CD8-positive, alpha-beta T cell (primary cell): ENCODE measurements at regions of chr7 and their contacts with region 1.

Region 1: GRCh38 chr7:74254129-74254857 is at the start of gene RFC2:
- DNase-seq: peak; percentile 93 to 99 (median 97)
- ATAC-seq: peak; percentile 95
- H3K4me3 ChIP-seq: peak within 1 kb of the TSS; percentile 85 to 99
- H3K4me3 Mint-ChIP-seq: peak within 1 kb of the TSS; percentile 93
- H3K27ac ChIP-seq: peak within 1 kb of the TSS; percentile 89 to 93
- H3K27ac Mint-ChIP-seq: peak within 1 kb of the TSS; percentile 96
- H3K4me1 ChIP-seq: peaks cover 17% of the 10 kb centered on the region
- H3K4me1 Mint-ChIP-seq: peaks cover 28% of the 10 kb centered on the region
- H3K27me3 ChIP-seq: no peaks in the 10 kb centered on the region
- H3K27me3 Mint-ChIP-seq: no peaks in the 10 kb centered on the region
- CTCF ChIP-seq: no peak
- total RNA-seq, gene RFC2: 8.8 to 10.7 TPM

Region 2: GRCh38 chr7:74068393-74069085 is 185.8 kb before region 1 on chr7:
- CTCF ChIA-PET with region 1: no interaction called
- POLR2A ChIA-PET with region 1: no interaction called
- intact Hi-C with region 1: loop called in 1 of 2 experiments (anchors 5 kb)
- DNase-seq: no peak
- ATAC-seq: no peak
- H3K4me3 ChIP-seq: no peak overlapping the region
- H3K4me3 Mint-ChIP-seq: no peak overlapping the region
- H3K27ac ChIP-seq: no peak overlapping the region
- H3K27ac Mint-ChIP-seq: no peak overlapping the region
- H3K4me1 ChIP-seq: no peaks in the 10 kb centered on the region
- H3K4me1 Mint-ChIP-seq: peaks cover 2% of the 10 kb centered on the region
- H3K27me3 ChIP-seq: no peaks in the 10 kb centered on the region
- H3K27me3 Mint-ChIP-seq: no peaks in the 10 kb centered on the region
- CTCF ChIP-seq: no peak

Region 3: GRCh38 chr7:74083117-74083876 is 171.0 kb before region 1 on chr7 and contains the start of gene LIMK1:
- CTCF ChIA-PET with region 1: no interaction called
- POLR2A ChIA-PET with region 1: no interaction called
- intact Hi-C with region 1: loop called in 1 of 2 experiments (anchors 2 kb)
- DNase-seq: peak; percentile 68 to 91 (median 81)
- ATAC-seq: peak; percentile 97
- H3K4me3 ChIP-seq: peak within 1 kb of the TSS; percentile 61
- H3K4me3 Mint-ChIP-seq: peak within 1 kb of the TSS; percentile 81
- H3K27ac ChIP-seq: peak within 1 kb of the TSS in 1 of 2 experiments; percentile 36
- H3K27ac Mint-ChIP-seq: no peak within 1 kb of the TSS
- H3K4me1 ChIP-seq: peaks cover 12% of the 10 kb centered on the region
- H3K4me1 Mint-ChIP-seq: peaks cover 9% of the 10 kb centered on the region
- H3K27me3 ChIP-seq: no peaks in the 10 kb centered on the region
- H3K27me3 Mint-ChIP-seq: no peaks in the 10 kb centered on the region
- CTCF ChIP-seq: no peak
- total RNA-seq, gene LIMK1: 12.8 to 13.7 TPM

Region 4: GRCh38 chr7:74121401-74122249 is 132.7 kb before region 1 on chr7:
- CTCF ChIA-PET with region 1: no interaction called
- POLR2A ChIA-PET with region 1: no interaction called
- intact Hi-C with region 1: no loop called
- DNase-seq: no peak
- ATAC-seq: no peak
- H3K4me3 ChIP-seq: no peak overlapping the region
- H3K4me3 Mint-ChIP-seq: no peak overlapping the region
- H3K27ac ChIP-seq: no peak overlapping the region
- H3K27ac Mint-ChIP-seq: no peak overlapping the region
- H3K4me1 ChIP-seq: no peaks in the 10 kb centered on the region
- H3K4me1 Mint-ChIP-seq: no peaks in the 10 kb centered on the region
- H3K27me3 ChIP-seq: no peaks in the 10 kb centered on the region
- H3K27me3 Mint-ChIP-seq: no peaks in the 10 kb centered on the region
- CTCF ChIP-seq: no peak

Region 5: DNA sequence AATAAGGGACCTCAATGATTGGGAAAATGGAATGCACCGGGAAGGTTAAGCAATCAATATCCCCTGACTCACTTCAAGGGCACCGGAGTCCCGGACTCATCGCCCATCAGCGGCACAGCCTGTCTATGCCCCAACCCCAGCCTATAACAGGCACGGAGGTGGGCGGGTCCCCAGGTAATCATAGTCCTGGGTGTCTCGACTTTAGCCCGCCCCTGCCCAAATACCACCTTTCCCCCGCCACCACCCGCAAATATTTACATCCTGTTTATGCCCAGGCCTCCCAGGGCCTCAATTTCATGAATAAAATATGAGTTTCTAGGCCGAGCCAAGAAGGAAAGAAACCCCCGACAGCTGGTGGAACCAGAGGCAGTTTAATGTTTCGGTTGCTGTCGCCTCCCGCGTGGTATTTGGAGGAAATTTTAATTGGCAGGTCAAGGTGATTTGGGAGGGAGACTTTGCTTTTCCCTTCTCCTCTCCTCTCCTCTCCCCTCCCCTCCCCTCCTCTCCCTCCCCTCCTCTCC is 15.5 kb after region 1 on chr7:
- CTCF ChIA-PET with region 1: no interaction called
- POLR2A ChIA-PET with region 1: no interaction called
- intact Hi-C with region 1: loop called in 1 of 2 experiments (anchors 1 kb)
- DNase-seq: peak; percentile 25 to 83 (median 65)
- ATAC-seq: peak; percentile 93
- H3K4me3 ChIP-seq: peak overlapping the region; percentile 50 to 61
- H3K4me3 Mint-ChIP-seq: peak overlapping the region; percentile 88
- H3K27ac ChIP-seq: no peak overlapping the region
- H3K27ac Mint-ChIP-seq: no peak overlapping the region
- H3K4me1 ChIP-seq: no peaks in the 10 kb centered on the region
- H3K4me1 Mint-ChIP-seq: peaks cover 7% of the 10 kb centered on the region
- H3K27me3 ChIP-seq: no peaks in the 10 kb centered on the region
- H3K27me3 Mint-ChIP-seq: peaks cover 5% of the 10 kb centered on the region
- CTCF ChIP-seq: no peak

Region 6: GRCh38 chr7:74289018-74289658 is 34.8 kb after region 1 on chr7 and contains the start of gene CLIP2:
- CTCF ChIA-PET with region 1: no interaction called
- POLR2A ChIA-PET with region 1: interaction called, 3 read pairs
- intact Hi-C with region 1: loop called (anchors 1 kb)
- DNase-seq: peak; percentile 59 to 87 (median 76)
- ATAC-seq: peak; percentile 85
- H3K4me3 ChIP-seq: peak within 1 kb of the TSS; percentile 54 to 75
- H3K4me3 Mint-ChIP-seq: peak within 1 kb of the TSS; percentile 89
- H3K27ac ChIP-seq: no peak within 1 kb of the TSS
- H3K27ac Mint-ChIP-seq: no peak within 1 kb of the TSS
- H3K4me1 ChIP-seq: peaks cover 22% of the 10 kb centered on the region
- H3K4me1 Mint-ChIP-seq: peaks cover 22% of the 10 kb centered on the region
- H3K27me3 ChIP-seq: no peaks in the 10 kb centered on the region
- H3K27me3 Mint-ChIP-seq: peaks cover 8% of the 10 kb centered on the region
- CTCF ChIP-seq: no peak
- total RNA-seq, gene CLIP2: 2.1 to 2.7 TPM

Region 7: DNA sequence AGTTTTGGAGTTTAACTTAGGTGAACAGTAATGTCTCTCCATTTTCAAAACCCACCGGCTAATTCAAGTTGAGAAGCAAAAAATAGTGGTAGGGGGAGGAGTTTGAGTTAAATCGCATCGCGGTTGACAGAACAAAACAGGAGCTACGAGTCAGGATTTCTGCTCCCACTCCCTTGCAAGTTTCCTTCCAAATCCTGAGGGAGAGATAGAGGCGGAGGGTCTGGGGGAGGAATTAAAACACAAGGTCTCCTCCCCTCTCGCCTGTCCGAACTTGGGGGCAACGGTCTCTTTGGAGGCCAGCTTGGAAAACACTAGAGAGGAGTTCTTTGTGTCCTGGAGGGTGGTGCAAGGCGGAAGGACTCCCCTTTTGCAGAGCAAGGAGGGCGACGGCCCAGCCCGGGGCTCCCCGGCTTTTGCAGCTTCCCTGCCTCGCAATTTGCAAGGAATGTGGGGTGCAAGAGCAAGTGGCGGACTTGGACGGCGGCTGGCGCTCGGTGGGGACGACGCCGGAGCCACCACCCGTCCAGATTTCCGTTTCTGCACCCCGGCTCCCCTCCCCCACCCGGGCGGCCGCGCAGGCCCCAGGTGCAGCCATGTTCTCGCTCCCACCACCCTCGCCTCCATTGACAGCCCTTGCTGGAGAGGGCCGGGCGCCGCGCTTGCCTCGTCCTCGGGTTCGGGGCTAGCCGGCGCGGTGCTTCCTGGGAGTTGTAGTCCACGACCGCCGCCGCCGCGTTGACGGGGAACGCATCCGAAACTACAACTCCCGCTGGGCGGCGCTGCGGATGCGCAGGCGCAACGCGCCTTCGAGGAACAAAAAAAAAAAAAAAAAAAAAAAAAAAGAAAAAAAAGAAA is 402.8 kb after region 1 on chr7:
- CTCF ChIA-PET with region 1: no interaction called
- POLR2A ChIA-PET with region 1: no interaction called
- intact Hi-C with region 1: loop called in 1 of 2 experiments (anchors 2 kb)
- DNase-seq: peak; percentile 95 to 99 (median 98)
- ATAC-seq: peak; percentile 74
- H3K4me3 ChIP-seq: peak overlapping the region; percentile 77 to 88
- H3K4me3 Mint-ChIP-seq: peak overlapping the region; percentile 88
- H3K27ac ChIP-seq: peak overlapping the region; percentile 54 to 69
- H3K27ac Mint-ChIP-seq: peak overlapping the region; percentile 85
- H3K4me1 ChIP-seq: peaks cover 33% of the 10 kb centered on the region
- H3K4me1 Mint-ChIP-seq: peaks cover 45% of the 10 kb centered on the region
- H3K27me3 ChIP-seq: no peaks in the 10 kb centered on the region
- H3K27me3 Mint-ChIP-seq: no peaks in the 10 kb centered on the region
- CTCF ChIP-seq: no peak